Aorta (tissue), 5 donors: ENCODE measurements at regions of chr1 and their contacts with region 1.

Region 1: DNA sequence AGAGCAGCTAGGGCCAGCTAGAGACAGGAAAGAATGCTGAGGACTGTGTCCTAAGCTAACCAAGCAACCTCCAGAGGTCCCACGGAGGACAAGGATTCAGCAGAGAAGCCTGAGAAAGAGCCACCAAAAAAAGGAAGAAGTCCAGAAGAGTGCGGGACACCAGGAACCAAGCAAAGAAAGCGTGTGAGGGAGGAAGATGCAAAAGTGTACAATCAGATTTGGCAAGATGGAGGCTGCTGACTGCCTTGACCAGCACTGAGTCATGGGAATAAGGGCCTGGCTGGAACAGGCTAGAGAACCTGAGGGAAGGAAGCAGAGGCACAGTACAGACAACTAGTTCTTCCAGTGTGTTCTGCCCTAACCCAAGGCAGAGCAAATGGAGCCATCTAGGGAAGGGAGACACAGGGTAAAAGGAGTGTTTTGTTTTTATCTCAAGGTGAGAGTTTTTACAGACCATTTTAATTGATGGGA is 18.5 kb downstream of the TP53BP2 start:
- DNase-seq: no peak
- ATAC-seq: no peak
- H3K4me3 ChIP-seq: no peak overlapping the region
- H3K27ac ChIP-seq: no peak overlapping the region
- H3K4me1 ChIP-seq: peaks cover 0 to 13% of the 10 kb centered on the region in 2 donors
- H3K27me3 ChIP-seq: no peaks in the 10 kb centered on the region

Region 2: DNA sequence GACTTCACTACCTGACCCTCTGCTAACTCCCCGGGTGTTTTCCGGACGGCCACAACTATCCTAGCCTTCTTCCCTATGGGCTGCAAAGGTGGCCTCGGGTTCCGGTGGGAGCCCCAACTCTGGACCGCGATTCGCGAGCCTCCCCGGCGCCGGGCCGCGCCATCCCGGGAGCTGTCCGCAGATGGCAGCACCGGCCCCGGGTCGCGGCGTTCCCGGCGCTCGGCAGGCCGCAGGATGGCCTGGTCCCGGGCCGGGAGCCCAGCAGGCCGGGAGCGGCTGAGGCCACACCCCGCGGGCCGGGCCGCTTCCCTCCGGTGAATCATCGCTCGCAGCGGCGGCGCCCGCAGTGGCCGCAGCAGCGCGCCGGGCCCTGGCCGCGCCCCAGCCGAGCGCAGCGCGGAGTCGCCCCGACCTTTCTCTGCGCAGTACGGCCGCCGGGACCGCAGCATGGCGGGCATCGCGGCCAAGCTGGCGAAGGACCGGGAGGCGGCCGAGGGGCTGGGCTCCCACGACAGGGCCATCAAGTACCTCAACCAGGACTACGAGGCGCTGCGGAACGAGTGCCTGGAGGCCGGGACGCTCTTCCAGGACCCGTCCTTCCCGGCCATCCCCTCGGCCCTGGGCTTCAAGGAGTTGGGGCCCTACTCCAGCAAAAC is 114.9 kb before region 1 on chr1 and contains the start of gene CAPN2:
- intact Hi-C with region 1: loop called in 1 of 2 experiments (anchors 5 kb)
- DNase-seq: peak; percentile 89 to 95
- ATAC-seq: peak; percentile 96
- H3K4me3 ChIP-seq: peak within 1 kb of the TSS; percentile 68 to 91
- H3K27ac ChIP-seq: peak within 1 kb of the TSS; percentile 83 to 94
- H3K4me1 ChIP-seq: no peaks in the 10 kb centered on the region
- H3K27me3 ChIP-seq: no peaks in the 10 kb centered on the region
- total RNA-seq, gene CAPN2: 208 to 213 TPM

Region 3: GRCh38 chr1:223748773-223749733 is 78.2 kb before region 1 on chr1:
- intact Hi-C with region 1: no loop called
- DNase-seq: peak; percentile 79 to 90
- ATAC-seq: peak; percentile 93
- H3K4me3 ChIP-seq: peak overlapping the region in 1 of 2 donors; percentile 21
- H3K27ac ChIP-seq: peak overlapping the region in 1 of 2 donors; percentile 43
- H3K4me1 ChIP-seq: no peaks in the 10 kb centered on the region
- H3K27me3 ChIP-seq: no peaks in the 10 kb centered on the region

Region 4: DNA sequence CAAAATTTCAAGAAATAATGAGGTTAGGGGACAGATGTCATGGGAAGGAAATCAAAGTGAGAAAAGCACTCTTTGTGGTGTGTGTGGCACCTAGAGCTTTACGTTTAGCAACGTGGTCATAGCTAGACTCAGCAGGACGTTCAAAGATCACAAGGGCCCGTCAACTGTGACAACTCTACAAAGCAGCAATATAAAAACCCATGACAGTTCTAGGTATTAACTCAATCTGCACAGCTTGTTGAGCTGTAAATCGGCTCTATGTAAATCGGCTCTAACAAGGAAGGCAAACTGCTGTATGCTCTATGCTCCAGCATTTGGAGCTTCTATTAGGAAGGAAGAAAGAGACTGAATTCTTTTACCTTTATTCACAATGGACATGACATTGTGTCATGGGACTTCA is 46.3 kb before region 1 on chr1:
- intact Hi-C with region 1: loop called in 1 of 2 experiments (anchors 5 kb)
- DNase-seq: no peak
- ATAC-seq: no peak
- H3K4me3 ChIP-seq: no peak overlapping the region
- H3K27ac ChIP-seq: no peak overlapping the region
- H3K4me1 ChIP-seq: peaks cover 0 to 2% of the 10 kb centered on the region in 2 donors
- H3K27me3 ChIP-seq: no peaks in the 10 kb centered on the region